Activated CD4-positive, alpha-beta memory T cell treated with anti-CD3 and anti-CD28 coated beads, Interleukin-2, amount 10 ng/mL, durations not matched to agents 7 days and 5 days (primary cell): ENCODE measurements at regions of chr1 and their contacts with region 1.

Region 1: DNA sequence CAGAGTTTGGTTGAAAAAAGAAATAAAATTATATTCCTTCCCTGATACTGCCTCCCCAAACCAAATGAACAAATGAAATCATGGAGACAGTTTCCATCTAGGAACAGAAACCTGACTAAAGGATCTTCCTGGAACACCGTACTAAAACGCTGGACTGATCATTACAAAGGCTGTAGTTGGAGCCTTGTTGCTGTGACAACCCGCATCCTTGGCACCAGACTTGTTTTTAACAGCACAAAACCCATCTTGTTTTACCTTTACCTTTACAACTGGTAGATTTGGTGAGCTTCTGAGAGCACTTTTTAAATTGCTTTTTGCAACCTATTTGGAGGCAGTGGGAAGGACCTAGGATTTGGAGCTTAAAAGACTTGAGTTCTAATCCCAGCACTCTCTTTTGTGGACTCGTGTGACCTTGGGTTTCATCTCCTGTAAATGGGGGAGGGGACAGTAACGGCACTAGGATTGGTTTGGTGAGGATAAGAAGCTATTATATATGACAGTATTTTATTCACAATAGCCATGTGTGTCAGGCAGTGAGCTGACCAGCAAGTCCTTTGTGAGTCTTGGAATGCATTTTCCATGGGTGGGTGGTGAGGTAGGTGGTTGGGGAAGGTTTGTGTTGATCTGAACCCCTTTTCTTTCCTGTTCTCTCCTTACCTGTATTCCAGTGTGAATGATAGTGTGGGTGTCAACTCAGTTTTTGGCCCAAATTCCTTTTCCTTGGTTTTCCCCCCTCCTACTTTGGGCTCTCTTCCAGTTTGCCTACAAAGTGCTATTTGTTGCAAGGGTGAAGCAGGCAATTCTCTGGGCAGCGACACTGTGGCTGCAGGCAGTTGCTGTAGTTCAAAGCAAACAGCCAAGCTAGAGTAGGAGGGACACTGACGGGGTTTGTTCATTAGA is 12.6 kb downstream of the LRRC8D start:
- DNase-seq: no peak
- H3K4me3 Mint-ChIP-seq: no peak overlapping the region
- H3K27ac Mint-ChIP-seq: no peak overlapping the region
- H3K4me1 Mint-ChIP-seq: peaks cover 2% of the 10 kb centered on the region
- H3K27me3 Mint-ChIP-seq: peaks cover 3% of the 10 kb centered on the region

Region 2: GRCh38 chr1:89681045-89681729 is 152.2 kb before region 1 on chr1:
- CTCF ChIA-PET with region 1: no interaction called
- POLR2A ChIA-PET with region 1: no interaction called
- DNase-seq: no peak
- H3K4me3 Mint-ChIP-seq: no peak overlapping the region
- H3K27ac Mint-ChIP-seq: no peak overlapping the region
- H3K4me1 Mint-ChIP-seq: peaks cover 46% of the 10 kb centered on the region
- H3K27me3 Mint-ChIP-seq: no peaks in the 10 kb centered on the region

Region 3: GRCh38 chr1:89810302-89810701 is 23.1 kb before region 1 on chr1:
- CTCF ChIA-PET with region 1: no interaction called
- POLR2A ChIA-PET with region 1: no interaction called
- DNase-seq: no peak
- H3K4me3 Mint-ChIP-seq: no peak overlapping the region
- H3K27ac Mint-ChIP-seq: no peak overlapping the region
- H3K4me1 Mint-ChIP-seq: no peaks in the 10 kb centered on the region
- H3K27me3 Mint-ChIP-seq: peaks cover 14% of the 10 kb centered on the region

Region 4: GRCh38 chr1:89820422-89821321 is 12.8 kb before region 1 on chr1 and contains the start of gene LRRC8D:
- CTCF ChIA-PET with region 1: interaction called, 3 read pairs
- POLR2A ChIA-PET with region 1: interaction called, 17 read pairs
- DNase-seq: peak; percentile 72
- H3K4me3 Mint-ChIP-seq: peak within 1 kb of the TSS; percentile 76
- H3K27ac Mint-ChIP-seq: peak within 1 kb of the TSS; percentile 44
- H3K4me1 Mint-ChIP-seq: peaks cover 22% of the 10 kb centered on the region
- H3K27me3 Mint-ChIP-seq: peaks cover 11% of the 10 kb centered on the region
- total RNA-seq, gene LRRC8D: 19.4 to 20.3 TPM